ENCODE measurements at regions of chr20 and their contacts with region 1.

Region 1: DNA sequence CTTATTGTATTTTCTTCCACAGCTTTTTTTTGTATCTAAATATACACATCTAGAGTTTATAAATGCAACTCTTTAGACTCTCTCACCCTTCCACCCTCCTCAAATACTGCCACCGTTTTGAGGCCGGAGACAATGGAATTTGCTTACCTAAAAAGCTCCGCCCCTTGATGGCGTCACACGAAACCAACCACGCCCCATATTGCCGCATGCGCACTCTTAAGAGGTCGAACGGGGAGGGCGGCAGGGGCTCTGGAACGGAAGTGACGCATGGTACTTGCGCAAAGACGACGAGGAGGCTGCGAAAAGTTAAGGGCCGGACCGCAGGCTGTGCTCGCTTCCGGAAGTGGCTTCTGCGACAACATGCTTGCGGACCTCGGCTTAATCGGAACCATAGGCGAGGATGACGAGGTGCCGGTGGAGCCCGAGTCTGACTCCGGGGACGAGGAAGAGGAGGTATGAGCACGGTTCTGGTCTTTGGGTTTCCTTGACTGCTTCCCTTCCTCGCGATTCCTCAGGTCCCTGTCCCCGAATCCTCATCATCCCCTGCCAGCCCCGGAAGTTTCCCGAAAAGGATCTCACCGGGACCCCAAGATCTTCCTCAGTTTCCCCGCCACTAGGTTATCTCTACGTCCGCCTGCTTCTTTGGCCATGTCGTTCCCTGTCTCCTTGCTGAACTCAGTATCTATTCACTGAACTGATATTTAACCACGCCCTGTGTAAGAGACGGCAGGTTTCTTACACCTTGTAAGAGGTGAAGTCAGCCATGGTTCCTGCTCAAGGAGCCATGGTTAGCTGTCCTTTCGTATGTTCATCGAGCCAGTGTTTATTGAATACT is at the start of gene DDX27:
- DNase-seq: peak; percentile 95
- H3K4me3 Mint-ChIP-seq: peak within 1 kb of the TSS; percentile 97
- H3K27ac Mint-ChIP-seq: peak within 1 kb of the TSS; percentile 98
- H3K4me1 Mint-ChIP-seq: peaks cover 26% of the 10 kb centered on the region
- H3K27me3 Mint-ChIP-seq: no peaks in the 10 kb centered on the region
- total RNA-seq, gene DDX27: 53.1 and 57.4 TPM in 2 replicates

Region 2: GRCh38 chr20:48921151-48921898 is 298.0 kb before region 1 on chr20 and contains the start of gene ARFGEF2:
- intact Hi-C with region 1: loop called (anchors 5 kb)
- DNase-seq: peak; percentile 96
- H3K4me3 Mint-ChIP-seq: peak within 1 kb of the TSS; percentile 98
- H3K27ac Mint-ChIP-seq: peak within 1 kb of the TSS; percentile 99
- H3K4me1 Mint-ChIP-seq: peaks cover 50% of the 10 kb centered on the region
- H3K27me3 Mint-ChIP-seq: peaks cover 4% of the 10 kb centered on the region
- total RNA-seq, gene ARFGEF2: 28.3 and 30.1 TPM in 2 replicates

Region 3: DNA sequence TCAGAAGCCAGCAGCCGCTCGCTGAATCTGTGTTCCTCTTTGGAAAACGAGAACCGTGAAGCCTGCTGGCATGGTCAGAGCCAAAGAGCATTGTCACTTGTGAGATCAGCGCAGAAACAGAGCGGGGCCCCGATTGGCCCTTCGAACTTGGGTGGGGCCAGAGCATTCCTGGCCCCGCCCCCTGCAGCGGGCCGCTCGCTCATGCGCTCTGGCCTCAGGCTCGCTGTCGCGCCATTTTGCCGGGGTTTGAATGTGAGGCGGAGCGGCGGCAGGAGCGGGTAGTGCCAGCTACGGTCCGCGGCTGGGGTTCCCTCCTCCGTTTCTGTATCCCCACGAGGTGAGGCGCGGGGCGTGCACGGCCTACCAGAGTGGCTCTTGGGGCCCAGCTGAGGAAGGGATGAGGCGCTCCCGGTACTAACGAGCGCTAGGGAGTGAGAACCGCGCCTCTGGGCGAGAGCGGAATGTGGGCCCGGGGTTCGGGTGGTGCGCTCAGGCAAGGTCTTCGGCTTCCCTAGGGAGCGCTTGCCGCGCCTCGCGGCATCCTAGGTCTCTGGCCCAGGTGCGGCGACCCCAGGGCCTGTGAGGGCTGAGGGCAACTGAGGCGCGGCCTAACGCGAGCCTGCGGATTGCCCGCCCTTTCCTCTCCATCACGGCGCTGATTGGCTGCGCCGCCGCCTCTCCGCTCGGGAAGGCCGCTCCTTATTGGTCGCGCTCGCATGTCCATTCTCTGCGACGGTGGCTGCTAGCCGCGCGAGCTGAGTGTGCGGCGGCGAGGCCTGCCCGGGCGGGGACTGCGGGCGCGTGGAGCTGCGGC is 173.0 kb before region 1 on chr20 and contains the start of gene CSE1L:
- intact Hi-C with region 1: loop called (anchors 1 kb)
- DNase-seq: peak; percentile 94
- H3K4me3 Mint-ChIP-seq: peak within 1 kb of the TSS; percentile 88
- H3K27ac Mint-ChIP-seq: peak within 1 kb of the TSS; percentile 99
- H3K4me1 Mint-ChIP-seq: peaks cover 27% of the 10 kb centered on the region
- H3K27me3 Mint-ChIP-seq: peaks cover 2% of the 10 kb centered on the region
- total RNA-seq, gene CSE1L: 112 and 119 TPM in 2 replicates

Region 4: GRCh38 chr20:49166534-49167449 is 52.5 kb before region 1 on chr20:
- intact Hi-C with region 1: loop called (anchors 1 kb)
- DNase-seq: no peak
- H3K4me3 Mint-ChIP-seq: peak overlapping the region; percentile 72
- H3K27ac Mint-ChIP-seq: peak overlapping the region; percentile 89
- H3K4me1 Mint-ChIP-seq: peaks cover 51% of the 10 kb centered on the region
- H3K27me3 Mint-ChIP-seq: no peaks in the 10 kb centered on the region

Region 5: DNA sequence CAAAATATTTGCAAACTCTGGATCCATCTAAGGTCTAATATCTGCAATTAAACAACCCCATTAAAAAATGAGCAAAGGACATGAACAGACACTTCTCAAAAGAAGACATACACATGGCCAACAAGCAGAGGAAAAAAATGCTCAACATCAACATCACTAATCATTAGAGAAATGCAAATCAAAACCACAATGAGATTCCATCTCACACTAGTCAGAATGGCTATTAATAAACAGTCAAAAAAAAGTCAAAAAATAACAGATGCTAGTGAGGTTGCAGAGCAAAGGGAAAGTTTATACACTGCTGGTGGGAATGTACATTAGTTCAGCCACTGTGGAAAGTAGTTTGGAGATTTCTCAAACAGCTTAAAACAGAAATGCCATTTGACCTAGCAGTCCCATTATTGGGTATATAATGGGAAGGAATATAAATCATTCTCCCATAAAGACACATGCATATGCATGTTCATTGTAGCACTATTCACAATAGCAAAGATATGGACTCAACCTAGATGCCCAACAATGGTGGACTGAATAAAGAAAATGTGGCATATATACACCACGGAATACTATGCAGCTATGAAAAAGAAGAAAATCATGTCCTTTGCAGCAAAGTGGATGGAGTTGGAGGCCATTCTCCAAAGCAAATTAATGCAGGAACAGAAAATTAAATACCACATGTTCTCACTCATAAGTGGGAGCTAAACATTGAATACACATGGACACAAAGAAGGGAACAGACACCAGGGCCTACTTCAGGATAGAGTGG is 49.5 kb after region 1 on chr20:
- intact Hi-C with region 1: loop called (anchors 5 kb)
- DNase-seq: no peak
- H3K4me3 Mint-ChIP-seq: peak overlapping the region; percentile 86
- H3K27ac Mint-ChIP-seq: peak overlapping the region; percentile 50
- H3K4me1 Mint-ChIP-seq: peaks cover 76% of the 10 kb centered on the region
- H3K27me3 Mint-ChIP-seq: no peaks in the 10 kb centered on the region

Region 6: GRCh38 chr20:49349694-49350093 is 130.4 kb after region 1 on chr20:
- intact Hi-C with region 1: no loop called
- DNase-seq: no peak
- H3K4me3 Mint-ChIP-seq: no peak overlapping the region
- H3K27ac Mint-ChIP-seq: no peak overlapping the region
- H3K4me1 Mint-ChIP-seq: no peaks in the 10 kb centered on the region
- H3K27me3 Mint-ChIP-seq: peaks cover 26% of the 10 kb centered on the region

Measured in activated T-helper 1 cell treated with anti-CD3 and anti-CD28 coated beads, Interleukin-12 subunit alpha, Interleukin-12 subunit beta, Interleukin-2, Interleukin-4 antibody, amounts not matched to agents 30 ng/mL and 10 ng/mL and 1 ng/mL, durations not matched to agents 14 hours and 24 hours and 36 hours (primary cell).